ENCODE measurements at regions of chr1 and their contacts with region 1.

Region 1: GRCh38 chr1:25543425-25544242 is at the start of gene LDLRAP1:
- DNase-seq: peak; percentile 22 to 79 (median 56)
- ATAC-seq: peak; percentile 72
- H3K4me3 ChIP-seq: peak within 1 kb of the TSS; percentile 50 to 62
- H3K4me3 Mint-ChIP-seq: peak within 1 kb of the TSS; percentile 94
- H3K27ac ChIP-seq: peak within 1 kb of the TSS; percentile 16 to 56
- H3K27ac Mint-ChIP-seq: peak within 1 kb of the TSS; percentile 91
- H3K4me1 ChIP-seq: peaks cover 42% of the 10 kb centered on the region
- H3K4me1 Mint-ChIP-seq: peaks cover 49% of the 10 kb centered on the region
- H3K27me3 ChIP-seq: no peaks in the 10 kb centered on the region
- H3K27me3 Mint-ChIP-seq: no peaks in the 10 kb centered on the region
- CTCF ChIP-seq: no peak
- total RNA-seq, gene LDLRAP1: 46.1 to 49.5 TPM

Region 2: DNA sequence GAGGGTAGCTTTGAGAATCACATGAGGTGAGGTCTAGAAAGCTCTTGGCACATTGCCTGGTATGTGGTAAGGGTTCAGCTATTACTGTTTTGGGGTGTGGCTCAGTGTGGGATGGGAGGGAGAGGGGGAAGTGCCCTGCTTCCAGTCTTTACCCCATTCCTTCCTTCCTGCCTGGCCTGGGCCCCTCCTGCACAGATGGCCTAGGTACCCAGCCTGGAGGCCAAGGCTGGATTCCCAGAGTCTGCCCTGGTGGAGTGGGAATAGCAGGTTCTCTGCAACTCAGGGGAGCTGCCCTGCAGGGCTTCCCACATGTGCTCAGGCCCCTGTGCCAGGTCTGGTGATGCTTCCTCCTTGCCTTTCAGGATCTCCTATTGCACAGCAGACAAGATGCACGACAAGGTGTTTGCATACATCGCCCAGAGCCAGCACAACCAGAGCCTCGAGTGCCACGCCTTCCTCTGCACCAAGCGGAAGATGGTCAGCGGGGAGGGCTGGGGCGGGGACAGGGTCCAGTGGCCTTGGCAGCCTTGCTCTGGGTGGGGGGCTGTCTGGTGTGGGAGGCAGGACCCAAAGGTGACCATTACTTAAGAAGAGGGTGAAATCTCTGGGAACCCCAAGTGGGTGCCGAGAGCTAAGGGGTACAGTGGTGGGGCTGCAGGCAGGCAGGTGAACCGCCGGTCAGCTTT is 13.3 kb after region 1 on chr1:
- CTCF ChIA-PET with region 1: interaction called, 106 read pairs
- POLR2A ChIA-PET with region 1: interaction called, 121 read pairs
- intact Hi-C with region 1: loop called (anchors 1 kb)
- DNase-seq: peak in 7 of 9 experiments; percentile 27 to 80 (median 57)
- ATAC-seq: peak; percentile 55
- H3K4me3 ChIP-seq: no peak overlapping the region
- H3K4me3 Mint-ChIP-seq: peak overlapping the region; percentile 61
- H3K27ac ChIP-seq: peak overlapping the region; percentile 22 to 68
- H3K27ac Mint-ChIP-seq: peak overlapping the region; percentile 96
- H3K4me1 ChIP-seq: peaks cover 99% of the 10 kb centered on the region
- H3K4me1 Mint-ChIP-seq: peaks cover 98% of the 10 kb centered on the region
- H3K27me3 ChIP-seq: no peaks in the 10 kb centered on the region
- H3K27me3 Mint-ChIP-seq: no peaks in the 10 kb centered on the region
- CTCF ChIP-seq: no peak

Region 3: DNA sequence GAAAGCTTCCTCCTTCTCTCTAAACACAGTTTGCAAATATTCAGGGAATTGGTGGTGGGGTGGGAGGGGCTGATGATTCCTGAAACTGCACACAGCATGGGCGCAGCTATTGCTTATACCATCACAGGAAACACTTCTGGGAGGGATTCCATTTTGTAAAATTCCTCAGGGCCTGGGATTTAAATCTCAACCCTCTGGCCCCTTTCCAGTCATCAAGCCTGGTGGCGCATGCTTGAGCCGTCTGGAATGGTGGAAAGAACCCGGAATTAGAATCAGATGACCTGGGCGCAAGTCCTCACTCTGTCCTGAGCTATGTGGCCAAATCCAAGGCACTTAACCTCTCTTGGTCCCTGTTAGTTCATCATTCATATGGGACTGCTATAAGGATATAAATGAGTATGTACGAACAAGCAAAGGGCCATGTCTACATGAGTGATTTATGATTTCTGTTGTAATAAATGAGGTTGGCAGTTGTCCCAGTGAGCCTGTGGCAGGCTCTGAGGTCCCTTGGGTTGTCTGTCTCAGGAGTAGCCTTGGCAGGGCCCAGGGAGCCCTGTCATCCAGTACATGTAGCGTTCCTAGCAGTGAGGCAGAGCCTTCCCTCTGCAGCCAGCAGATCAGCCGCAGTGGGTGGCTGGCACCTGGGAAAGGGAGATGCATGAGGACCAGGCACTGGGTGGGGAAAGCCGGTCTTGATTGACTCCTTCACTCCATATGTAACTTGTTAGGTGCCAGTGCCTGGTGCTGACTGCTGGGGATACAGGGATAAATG is 144.9 kb after region 1 on chr1:
- CTCF ChIA-PET with region 1: no interaction called
- POLR2A ChIA-PET with region 1: no interaction called
- intact Hi-C with region 1: no loop called
- DNase-seq: no peak
- ATAC-seq: no peak
- H3K4me3 ChIP-seq: no peak overlapping the region
- H3K4me3 Mint-ChIP-seq: no peak overlapping the region
- H3K27ac ChIP-seq: no peak overlapping the region
- H3K27ac Mint-ChIP-seq: peak overlapping the region; percentile 62
- H3K4me1 ChIP-seq: peaks cover 54% of the 10 kb centered on the region
- H3K4me1 Mint-ChIP-seq: peaks cover 64% of the 10 kb centered on the region
- H3K27me3 ChIP-seq: no peaks in the 10 kb centered on the region
- H3K27me3 Mint-ChIP-seq: no peaks in the 10 kb centered on the region
- CTCF ChIP-seq: no peak